Gastrocnemius medialis (tissue), 4 donors: ENCODE measurements at regions of chr6 and their contacts with region 1.

Region 1: DNA sequence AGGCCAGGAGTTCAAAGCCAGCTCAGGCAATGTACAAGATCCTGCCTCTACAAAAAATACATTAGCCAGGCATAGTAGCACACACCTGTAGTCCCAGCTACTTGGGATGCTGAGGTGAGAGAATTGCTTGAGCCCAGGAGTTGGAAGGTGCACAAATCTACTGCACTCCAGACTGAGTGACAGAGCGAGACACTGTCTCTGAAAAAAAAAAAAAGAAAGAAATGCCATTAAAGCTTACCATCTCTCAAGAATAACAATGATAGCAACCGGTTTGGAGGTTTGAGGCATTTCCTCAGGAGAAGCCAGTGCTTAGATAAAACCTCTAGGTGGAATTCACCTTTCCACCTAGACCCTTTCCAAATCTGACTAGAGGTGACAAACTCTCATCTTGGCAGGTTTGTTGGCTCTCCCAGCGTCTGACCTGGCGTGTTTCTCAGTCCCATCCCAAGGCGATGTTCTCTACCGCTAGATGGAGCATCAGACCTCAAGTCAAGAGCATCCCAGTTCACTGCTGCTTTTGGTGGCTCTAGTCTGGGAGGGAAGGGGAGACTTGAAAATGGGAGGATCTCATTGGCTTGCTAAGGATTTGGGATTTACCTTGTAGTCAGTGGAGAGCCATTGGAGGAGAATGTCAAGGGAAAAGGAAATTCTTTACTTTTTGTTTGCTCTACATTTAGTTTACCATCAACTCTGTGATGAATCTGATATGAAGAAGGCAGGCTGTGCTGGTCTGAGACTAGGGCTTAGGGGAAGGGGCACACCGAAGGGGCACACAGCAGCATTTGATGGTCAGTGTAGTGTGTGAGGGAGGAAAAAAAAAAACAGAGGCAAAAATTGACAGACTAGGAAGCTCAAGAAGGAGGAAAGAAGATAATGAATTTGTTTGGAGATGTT is 67.9 kb downstream of the NCOA7 start:
- DNase-seq: peak; percentile 9 to 36
- ATAC-seq: peak; percentile 75 to 81
- H3K4me3 ChIP-seq: no peak overlapping the region
- H3K27ac ChIP-seq: no peak overlapping the region
- H3K4me1 ChIP-seq: no peaks in the 10 kb centered on the region
- H3K27me3 ChIP-seq: no peaks in the 10 kb centered on the region
- CTCF ChIP-seq: peak; percentile 31 to 72 (median 52)
- POLR2A ChIP-seq: no peak

Region 2: DNA sequence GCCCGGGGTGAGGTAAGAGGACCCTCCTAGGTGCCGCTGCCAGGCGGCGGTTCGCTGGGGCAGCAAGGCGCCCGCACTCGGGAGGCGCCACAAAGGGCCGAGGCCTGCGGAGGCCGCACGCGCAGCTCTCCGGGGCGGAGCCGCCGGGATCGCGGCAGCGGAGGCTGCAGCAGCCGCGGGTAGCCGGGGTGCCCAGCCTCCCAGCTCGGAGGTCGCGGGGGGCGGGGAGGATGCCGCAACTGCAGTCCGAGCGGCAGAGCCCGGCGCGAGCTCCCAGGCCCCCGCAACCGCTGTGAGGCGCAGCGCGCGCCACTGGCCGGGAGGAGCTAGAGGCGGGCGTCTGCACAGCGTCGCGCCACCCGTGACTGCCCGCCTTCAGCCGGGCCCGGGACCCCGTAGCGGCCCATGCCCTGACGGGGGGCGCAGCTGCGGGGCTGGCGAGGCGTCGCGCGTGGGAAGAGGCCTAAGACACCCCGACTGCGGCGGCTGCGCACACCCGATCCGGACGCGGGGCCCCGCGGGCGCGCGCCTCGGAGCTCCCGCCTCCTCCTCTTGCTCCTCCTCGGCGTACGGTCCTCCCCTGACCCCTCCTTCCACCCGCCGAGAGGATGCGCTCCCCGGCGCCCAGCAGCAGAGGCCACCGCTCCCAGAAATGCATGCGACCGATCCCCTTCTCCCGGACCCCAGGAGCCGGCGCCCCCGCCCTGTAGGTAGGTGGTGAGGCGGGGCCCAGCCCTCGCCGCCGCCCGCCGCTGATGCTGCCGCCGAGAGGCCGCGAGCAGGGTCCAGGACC is 68.1 kb before region 1 on chr6 and contains the start of gene NCOA7:
- in situ Hi-C with region 1: no loop called
- intact Hi-C with region 1: loop called (anchors 5 kb)
- DNase-seq: peak; percentile 67 to 71
- ATAC-seq: peak; percentile 83 to 85
- H3K4me3 ChIP-seq: peak within 1 kb of the TSS; percentile 76 to 97 (median 89)
- H3K27ac ChIP-seq: peak within 1 kb of the TSS; percentile 90 to 98 (median 92)
- H3K4me1 ChIP-seq: peaks cover 19% of the 10 kb centered on the region in 2 donors
- H3K27me3 ChIP-seq: no peaks in the 10 kb centered on the region
- CTCF ChIP-seq: peak in 2 of 5 experiments; percentile 17 to 27
- POLR2A ChIP-seq: peak; percentile 81 to 86
- total RNA-seq, gene NCOA7: 7.0 to 9.5 (median 9.2) TPM

Region 3: GRCh38 chr6:125956506-125957390 is 98.1 kb after region 1 on chr6 and contains the start of gene HINT3:
- in situ Hi-C with region 1: loop called in 1 of 4 experiments (anchors 25 kb)
- intact Hi-C with region 1: loop called (anchors 5 kb)
- DNase-seq: peak; percentile 93 to 94
- ATAC-seq: peak; percentile 93 to 98
- H3K4me3 ChIP-seq: peak within 1 kb of the TSS; percentile 62 to 97 (median 82)
- H3K27ac ChIP-seq: peak within 1 kb of the TSS; percentile 83 to 95 (median 92)
- H3K4me1 ChIP-seq: peaks cover 10 to 20% of the 10 kb centered on the region in 2 donors
- H3K27me3 ChIP-seq: no peaks in the 10 kb centered on the region
- CTCF ChIP-seq: peak; percentile 97 to 99 (median 98)
- POLR2A ChIP-seq: peak; percentile 59 to 62
- total RNA-seq, gene HINT3: 54.3 to 81.5 (median 67.5) TPM

Region 4: DNA sequence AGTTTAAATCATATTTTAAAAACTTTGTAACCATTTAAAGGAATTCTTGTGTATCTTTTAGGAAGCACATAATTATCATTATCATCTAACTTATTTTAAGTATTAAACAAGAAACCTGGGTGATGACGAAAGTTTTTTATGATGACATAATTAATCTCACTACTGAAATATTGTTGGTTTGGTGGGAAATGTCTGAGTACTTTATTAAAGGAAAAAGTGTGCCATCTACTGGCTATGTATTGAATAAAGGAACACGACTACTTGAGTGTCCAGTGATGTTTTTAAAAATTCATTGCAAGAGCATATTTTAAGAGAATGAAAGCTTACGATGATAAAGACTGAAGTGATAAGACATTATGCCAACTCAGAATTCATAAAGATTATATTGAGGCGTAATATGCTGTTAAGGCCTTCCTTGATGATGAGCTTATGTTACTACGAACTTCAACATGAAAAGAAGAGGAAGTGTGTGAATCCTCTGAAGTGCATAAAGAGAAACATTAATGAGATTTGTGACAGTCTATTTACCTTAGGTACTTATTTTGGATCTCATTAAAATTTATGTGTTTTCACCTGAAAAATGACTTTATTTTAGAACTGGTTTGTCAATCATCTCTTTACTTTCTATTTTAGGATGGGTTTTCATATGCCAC is 115.7 kb after region 1 on chr6:
- in situ Hi-C with region 1: loop called in 2 of 4 experiments (anchors 10 to 25 kb)
- intact Hi-C with region 1: loop called (anchors 2 kb)
- DNase-seq: no peak
- ATAC-seq: peak in 1 of 2 donors; percentile 49
- H3K4me3 ChIP-seq: no peak overlapping the region
- H3K27ac ChIP-seq: no peak overlapping the region
- H3K4me1 ChIP-seq: no peaks in the 10 kb centered on the region
- H3K27me3 ChIP-seq: no peaks in the 10 kb centered on the region
- CTCF ChIP-seq: peak in 2 of 5 experiments; percentile 45 to 51
- POLR2A ChIP-seq: no peak